ENCODE measurements at regions of chr1 and their contacts with region 1.

Region 1: GRCh38 chr1:194295685-194296084 is 1109.3 kb upstream of the B3GALT2 start:
- DNase-seq: peak in 7 of 9 donors; percentile 51 to 78 (median 69)
- ATAC-seq: peak; percentile 94
- H3K4me3 ChIP-seq: no peak overlapping the region
- H3K4me3 Mint-ChIP-seq: no peak overlapping the region
- H3K27ac ChIP-seq: no peak overlapping the region
- H3K27ac Mint-ChIP-seq: peak overlapping the region in 4 of 9 donors; percentile 10 to 71 (median 56)
- H3K4me1 ChIP-seq: peaks cover 2 to 9% of the 10 kb centered on the region in 2 donors
- H3K4me1 Mint-ChIP-seq: peaks cover 8 to 25% (median 20%) of the 10 kb centered on the region in 7 donors
- H3K27me3 ChIP-seq: no peaks in the 10 kb centered on the region
- H3K27me3 Mint-ChIP-seq: no peaks in the 10 kb centered on the region

Region 2: GRCh38 chr1:192477630-192478029 is 1818.1 kb before region 1 on chr1:
- CTCF ChIA-PET with region 1: no interaction called
- POLR2A ChIA-PET with region 1: no interaction called
- intact Hi-C with region 1: loop called in 1 of 2 experiments (anchors 1 kb)
- DNase-seq: peak in 6 of 9 donors; percentile 20 to 59 (median 38)
- ATAC-seq: peak; percentile 75
- H3K4me3 ChIP-seq: no peak overlapping the region
- H3K4me3 Mint-ChIP-seq: no peak overlapping the region
- H3K27ac ChIP-seq: no peak overlapping the region
- H3K27ac Mint-ChIP-seq: no peak overlapping the region
- H3K4me1 ChIP-seq: no peaks in the 10 kb centered on the region
- H3K4me1 Mint-ChIP-seq: no peaks in the 10 kb centered on the region
- H3K27me3 ChIP-seq: no peaks in the 10 kb centered on the region
- H3K27me3 Mint-ChIP-seq: peaks cover 0 to 16% (median 0%) of the 10 kb centered on the region in 5 donors

Region 3: DNA sequence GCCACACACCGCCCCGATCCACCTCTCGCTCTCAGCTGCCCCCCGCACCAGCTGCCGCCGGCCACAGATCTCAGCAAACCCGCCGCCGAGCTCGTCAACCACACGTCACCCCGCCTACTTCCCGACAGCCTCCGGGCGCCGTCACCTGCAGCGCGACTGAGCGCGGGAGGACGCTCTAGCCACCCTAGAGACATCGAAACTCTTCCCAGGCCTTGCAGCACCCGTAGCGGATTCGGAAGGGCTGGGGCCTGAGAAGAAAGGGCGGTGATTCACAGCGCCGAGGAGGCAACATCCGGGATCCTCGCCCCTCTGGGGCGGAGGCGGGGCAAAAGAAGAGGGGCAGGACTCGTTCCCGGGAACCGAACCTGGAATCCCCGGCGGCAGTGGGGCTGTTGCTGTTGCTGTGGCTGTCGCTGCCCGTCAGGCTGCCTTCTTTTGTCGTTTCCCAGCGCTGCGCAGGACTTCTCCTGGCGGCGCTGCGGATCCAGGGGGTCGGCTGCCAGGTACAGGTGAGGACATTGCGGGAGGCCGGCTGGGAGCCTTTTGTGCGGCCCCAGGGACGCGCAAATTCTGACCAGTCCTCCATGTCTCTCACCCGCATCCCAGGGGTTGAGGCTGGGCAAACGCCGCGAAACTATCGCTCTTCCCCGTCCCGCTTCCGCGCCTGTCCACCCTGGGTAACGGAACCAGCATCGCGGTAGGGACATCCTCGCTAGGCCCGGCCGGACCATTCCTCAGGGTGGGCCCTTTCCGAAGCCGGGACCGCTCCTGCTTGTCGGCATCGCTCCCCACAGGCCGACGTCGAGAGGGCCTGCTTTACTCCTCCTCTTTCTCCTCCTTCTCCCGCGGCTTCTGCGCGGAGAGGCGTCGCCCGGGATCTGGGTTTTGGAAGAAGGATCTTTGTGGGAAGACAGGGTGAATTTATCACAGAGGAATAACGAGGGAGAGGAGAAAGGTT is 1236.1 kb before region 1 on chr1 and contains the starts of genes RO60 and UCHL5:
- CTCF ChIA-PET with region 1: no interaction called
- POLR2A ChIA-PET with region 1: no interaction called
- intact Hi-C with region 1: loop called in 1 of 2 experiments (anchors 10 kb)
- DNase-seq: peak; percentile 79 to 96 (median 94)
- ATAC-seq: peak; percentile 98
- H3K4me3 ChIP-seq: peak within 1 kb of the TSS; percentile 96
- H3K4me3 Mint-ChIP-seq: peak within 1 kb of the TSS; percentile 93 to 100 (median 98)
- H3K27ac ChIP-seq: peak within 1 kb of the TSS; percentile 89
- H3K27ac Mint-ChIP-seq: peak within 1 kb of the TSS; percentile 97 to 100 (median 98)
- H3K4me1 ChIP-seq: peaks cover 22 to 30% of the 10 kb centered on the region in 2 donors
- H3K4me1 Mint-ChIP-seq: peaks cover 47 to 78% (median 72%) of the 10 kb centered on the region in 7 donors
- H3K27me3 ChIP-seq: no peaks in the 10 kb centered on the region
- H3K27me3 Mint-ChIP-seq: no peaks in the 10 kb centered on the region
- total RNA-seq, gene RO60: 49.8 to 75.1 (median 67.2) TPM
- total RNA-seq, gene UCHL5: 20.2 to 48.6 (median 31.8) TPM

Region 4: GRCh38 chr1:193183019-193183627 is 1112.6 kb before region 1 on chr1:
- CTCF ChIA-PET with region 1: interaction called, 12 read pairs
- POLR2A ChIA-PET with region 1: no interaction called
- intact Hi-C with region 1: loop called (anchors 1 kb)
- DNase-seq: peak in 7 of 9 donors; percentile 21 to 62 (median 56)
- ATAC-seq: peak; percentile 85
- H3K4me3 ChIP-seq: no peak overlapping the region
- H3K4me3 Mint-ChIP-seq: no peak overlapping the region
- H3K27ac ChIP-seq: no peak overlapping the region
- H3K27ac Mint-ChIP-seq: no peak overlapping the region
- H3K4me1 ChIP-seq: peaks cover 0 to 8% of the 10 kb centered on the region in 2 donors
- H3K4me1 Mint-ChIP-seq: peaks cover 24 to 77% (median 58%) of the 10 kb centered on the region in 7 donors
- H3K27me3 ChIP-seq: no peaks in the 10 kb centered on the region
- H3K27me3 Mint-ChIP-seq: no peaks in the 10 kb centered on the region

Region 5: DNA sequence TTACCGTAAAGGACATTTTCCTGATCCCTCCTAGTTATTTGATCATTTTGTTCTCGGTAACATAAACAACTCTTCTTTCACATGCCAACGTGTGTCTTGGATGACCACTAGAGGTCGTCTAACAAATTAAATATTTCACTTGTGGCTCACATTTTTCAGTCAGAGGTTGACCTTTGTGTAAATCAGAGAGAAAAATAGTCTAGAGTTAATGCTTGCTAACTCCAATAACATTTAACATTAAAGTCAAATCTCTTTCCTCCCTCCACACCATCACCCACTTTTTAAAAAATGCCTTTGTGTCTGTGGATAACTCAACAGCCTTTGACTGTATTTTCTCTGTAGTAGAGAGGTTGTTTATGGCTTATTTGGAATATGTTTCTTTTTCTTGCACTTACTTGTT is 888.8 kb before region 1 on chr1:
- CTCF ChIA-PET with region 1: interaction called, 4 read pairs
- POLR2A ChIA-PET with region 1: no interaction called
- intact Hi-C with region 1: loop called (anchors 1 kb)
- DNase-seq: peak in 6 of 9 donors; percentile 30 to 54 (median 48)
- ATAC-seq: peak; percentile 70
- H3K4me3 ChIP-seq: no peak overlapping the region
- H3K4me3 Mint-ChIP-seq: peak overlapping the region in 3 of 10 donors; percentile 3 to 11 (median 5)
- H3K27ac ChIP-seq: no peak overlapping the region
- H3K27ac Mint-ChIP-seq: peak overlapping the region in 5 of 9 donors; percentile 0 to 68 (median 10)
- H3K4me1 ChIP-seq: peaks cover 4 to 11% of the 10 kb centered on the region in 2 donors
- H3K4me1 Mint-ChIP-seq: peaks cover 11 to 34% (median 24%) of the 10 kb centered on the region in 7 donors
- H3K27me3 ChIP-seq: no peaks in the 10 kb centered on the region
- H3K27me3 Mint-ChIP-seq: no peaks in the 10 kb centered on the region

Region 6: GRCh38 chr1:193754732-193755427 is 540.8 kb before region 1 on chr1:
- CTCF ChIA-PET with region 1: no interaction called
- POLR2A ChIA-PET with region 1: no interaction called
- intact Hi-C with region 1: loop called in 1 of 2 experiments (anchors 10 kb)
- DNase-seq: no peak
- ATAC-seq: no peak
- H3K4me3 ChIP-seq: no peak overlapping the region
- H3K4me3 Mint-ChIP-seq: no peak overlapping the region
- H3K27ac ChIP-seq: no peak overlapping the region
- H3K27ac Mint-ChIP-seq: no peak overlapping the region
- H3K4me1 ChIP-seq: no peaks in the 10 kb centered on the region
- H3K4me1 Mint-ChIP-seq: peaks cover 0 to 6% (median 0%) of the 10 kb centered on the region in 7 donors
- H3K27me3 ChIP-seq: no peaks in the 10 kb centered on the region
- H3K27me3 Mint-ChIP-seq: no peaks in the 10 kb centered on the region

Region 7: GRCh38 chr1:194159940-194160339 is 135.7 kb before region 1 on chr1:
- CTCF ChIA-PET with region 1: no interaction called
- POLR2A ChIA-PET with region 1: no interaction called
- intact Hi-C with region 1: loop called in 1 of 2 experiments (anchors 5 kb)
- DNase-seq: no peak
- ATAC-seq: no peak
- H3K4me3 ChIP-seq: no peak overlapping the region
- H3K4me3 Mint-ChIP-seq: no peak overlapping the region
- H3K27ac ChIP-seq: no peak overlapping the region
- H3K27ac Mint-ChIP-seq: peak overlapping the region in 1 of 9 donors; percentile 5
- H3K4me1 ChIP-seq: no peaks in the 10 kb centered on the region
- H3K4me1 Mint-ChIP-seq: peaks cover 0 to 13% (median 10%) of the 10 kb centered on the region in 7 donors
- H3K27me3 ChIP-seq: no peaks in the 10 kb centered on the region
- H3K27me3 Mint-ChIP-seq: no peaks in the 10 kb centered on the region